Head of caudate nucleus (tissue), 42 donors: ENCODE measurements at regions of chr15 and their contacts with region 1.

Region 1: GRCh38 chr15:48861813-48862431 is 16.0 kb upstream of the EID1 start:
- DNase-seq: peak in 20 of 42 donors; percentile 6 to 70 (median 48)

Region 2: GRCh38 chr15:48896869-48897814 is 35.2 kb after region 1 on chr15:
- intact Hi-C with region 1: no loop called
- DNase-seq: peak in 27 of 42 donors; percentile 5 to 72 (median 36)

Region 3: GRCh38 chr15:49145651-49146609 is 284.0 kb after region 1 on chr15:
- intact Hi-C with region 1: loop called (anchors 2 kb)
- DNase-seq: peak in 30 of 42 donors; percentile 12 to 85 (median 61)

Region 4: GRCh38 chr15:50145451-50145872 is 1283.5 kb after region 1 on chr15:
- intact Hi-C with region 1: loop called (anchors 10 kb)
- DNase-seq: peak in 9 of 42 donors; percentile 9 to 42 (median 15)